ENCODE measurements at regions of chr15 and their contacts with region 1.

Region 1: GRCh38 chr15:96345560-96346399 is 15.3 kb downstream of the NR2F2 start:
- DNase-seq: peak; percentile 38
- ATAC-seq: peak; percentile 52
- H3K4me3 ChIP-seq: no peak overlapping the region
- H3K27ac ChIP-seq: no peak overlapping the region
- H3K4me1 ChIP-seq: no peaks in the 10 kb centered on the region
- H3K27me3 ChIP-seq: no peaks in the 10 kb centered on the region
- CTCF ChIP-seq: peak; percentile 55

Region 2: DNA sequence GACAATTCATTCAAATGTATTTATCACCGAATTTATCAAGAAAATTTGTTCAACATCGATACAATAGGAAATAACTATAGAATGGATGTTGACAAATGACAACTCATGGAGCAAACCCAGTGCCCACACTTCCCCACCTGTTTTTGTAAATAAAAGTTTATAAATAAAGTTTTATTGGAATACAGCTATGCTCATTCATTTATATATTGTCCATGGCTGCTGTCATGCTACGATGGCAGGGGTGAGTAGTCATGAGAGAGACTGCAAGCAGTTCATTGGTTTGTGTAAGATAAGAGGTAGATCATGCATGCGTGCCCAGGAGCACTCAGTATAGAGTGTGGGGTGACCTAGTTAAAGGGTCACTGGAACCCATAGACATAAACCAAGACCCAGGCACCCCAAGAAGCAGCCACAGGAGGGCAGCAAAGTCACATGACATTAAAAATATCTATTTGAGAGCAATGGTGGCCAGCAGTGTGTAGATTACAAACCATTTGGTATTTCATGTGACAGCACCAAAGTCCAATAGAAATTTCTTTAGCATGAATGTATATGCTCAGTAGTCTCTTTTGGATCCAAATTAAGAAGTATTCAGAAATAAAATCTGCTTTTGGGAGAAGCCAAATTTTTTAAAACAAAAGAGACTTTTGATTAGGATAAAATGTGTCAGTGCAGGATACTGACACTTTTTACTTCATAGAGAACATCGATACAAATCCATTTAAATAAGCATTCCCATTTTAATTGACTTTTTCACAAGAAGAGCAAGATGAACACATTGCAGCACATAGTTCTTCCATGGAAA is 1319.7 kb before region 1 on chr15:
- CTCF ChIA-PET with region 1: no interaction called
- POLR2A ChIA-PET with region 1: no interaction called
- intact Hi-C with region 1: loop called (anchors 5 kb)
- DNase-seq: peak; percentile 69
- ATAC-seq: no peak
- H3K4me3 ChIP-seq: no peak overlapping the region
- H3K27ac ChIP-seq: no peak overlapping the region
- H3K4me1 ChIP-seq: no peaks in the 10 kb centered on the region
- H3K27me3 ChIP-seq: no peaks in the 10 kb centered on the region; the same call in 1 of the 2 replicates
- CTCF ChIP-seq: peak; percentile 75

Region 3: GRCh38 chr15:95929232-95929846 is 416.4 kb before region 1 on chr15:
- CTCF ChIA-PET with region 1: no interaction called
- POLR2A ChIA-PET with region 1: no interaction called
- intact Hi-C with region 1: no loop called
- DNase-seq: no peak
- ATAC-seq: no peak
- H3K4me3 ChIP-seq: no peak overlapping the region
- H3K27ac ChIP-seq: no peak overlapping the region
- H3K4me1 ChIP-seq: peaks cover 22% of the 10 kb centered on the region
- H3K27me3 ChIP-seq: no peaks in the 10 kb centered on the region
- CTCF ChIP-seq: no peak

Region 4: GRCh38 chr15:96197721-96198120 is 148.1 kb before region 1 on chr15:
- CTCF ChIA-PET with region 1: interaction called, 10 read pairs
- POLR2A ChIA-PET with region 1: no interaction called
- intact Hi-C with region 1: no loop called
- DNase-seq: no peak
- ATAC-seq: no peak
- H3K4me3 ChIP-seq: no peak overlapping the region
- H3K27ac ChIP-seq: no peak overlapping the region
- H3K4me1 ChIP-seq: no peaks in the 10 kb centered on the region
- H3K27me3 ChIP-seq: no peaks in the 10 kb centered on the region
- CTCF ChIP-seq: no peak

Region 5: GRCh38 chr15:96273317-96274086 is 72.3 kb before region 1 on chr15:
- CTCF ChIA-PET with region 1: no interaction called
- POLR2A ChIA-PET with region 1: interaction called, 11 read pairs
- intact Hi-C with region 1: no loop called
- DNase-seq: peak; percentile 98
- ATAC-seq: peak; percentile 91
- H3K4me3 ChIP-seq: peak overlapping the region; percentile 49; the same call in 1 of the 2 replicates
- H3K27ac ChIP-seq: peak overlapping the region; percentile 88
- H3K4me1 ChIP-seq: peaks cover 76% of the 10 kb centered on the region
- H3K27me3 ChIP-seq: no peaks in the 10 kb centered on the region
- CTCF ChIP-seq: no peak

Measured in PC-3 (cell line).